HEK293 (cell line): ENCODE measurements at regions of chr15 and their contacts with region 1.

Region 1: DNA sequence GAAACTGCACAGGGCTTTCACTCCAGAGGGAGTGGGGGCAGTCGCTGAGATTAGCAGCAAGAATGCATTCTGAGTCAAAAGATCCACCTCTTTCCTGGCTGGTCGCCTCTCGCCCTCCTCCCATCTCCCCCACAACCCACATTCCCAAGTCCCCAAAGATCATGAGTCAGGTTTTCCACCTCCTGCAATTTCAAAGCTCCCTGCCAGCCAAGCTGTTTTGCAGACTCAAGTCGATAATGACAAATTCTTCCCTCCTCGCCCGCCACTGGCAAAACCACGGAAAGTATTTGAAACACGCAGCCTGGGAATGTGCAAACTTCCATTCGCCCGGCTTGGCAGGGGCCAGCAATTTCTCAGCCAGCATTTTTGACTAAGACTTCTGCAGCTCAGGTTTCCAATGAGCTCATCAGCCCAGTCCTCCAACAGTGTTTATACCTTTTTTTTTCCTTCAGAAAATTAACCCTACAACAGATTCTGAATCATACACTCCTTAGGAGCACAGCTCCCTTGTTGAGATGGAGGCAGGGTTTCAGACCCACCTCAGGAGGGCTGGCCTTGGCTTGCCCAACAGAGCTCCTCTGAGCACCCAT is 181.4 kb downstream of the SMAD6 start:
- H3K4me3 ChIP-seq: no peak overlapping the region
- H3K27ac ChIP-seq: peak overlapping the region; percentile 66
- H3K4me1 ChIP-seq: peaks cover 25% of the 10 kb centered on the region
- CTCF ChIP-seq: no peak

Region 2: DNA sequence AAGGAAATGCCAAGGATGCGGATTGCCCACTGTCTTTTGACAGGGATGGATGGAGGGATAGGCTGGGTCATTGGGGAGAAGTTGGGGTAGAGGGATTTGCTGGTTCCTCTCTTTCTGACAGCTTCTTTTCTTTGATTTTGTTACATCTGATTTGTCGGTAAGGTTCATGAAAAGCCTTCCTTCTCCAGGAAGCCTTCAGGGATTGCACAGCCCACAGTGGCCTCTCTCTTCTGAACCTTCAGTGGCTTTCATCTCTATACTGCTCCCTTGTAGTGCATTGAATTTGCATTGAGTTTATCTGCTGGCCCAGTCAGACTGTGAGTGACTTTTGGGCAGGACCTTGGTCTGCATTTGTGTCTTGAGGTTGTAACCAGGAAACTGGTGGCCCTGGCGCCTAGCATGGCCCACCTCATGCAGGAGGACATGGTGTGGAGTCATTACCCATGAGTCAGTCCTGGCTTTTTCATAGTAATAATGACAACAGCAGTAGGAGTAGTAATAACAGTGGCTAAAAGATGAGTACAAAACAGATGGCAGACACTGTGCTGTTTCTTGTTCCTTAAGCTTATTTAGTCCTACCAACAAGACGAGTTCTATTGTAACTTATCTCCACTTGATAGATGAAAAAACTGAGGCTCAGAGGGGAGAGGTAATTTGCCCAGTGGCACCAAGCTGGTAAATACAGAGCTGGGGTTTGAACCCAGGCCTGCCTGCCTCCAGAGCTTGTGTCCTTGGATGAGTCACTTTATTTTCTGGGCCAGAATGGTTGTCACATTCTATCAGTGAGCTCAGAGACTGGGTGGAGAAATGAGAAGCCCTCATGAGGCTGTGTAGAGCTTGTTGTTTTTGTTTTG is 153.0 kb before region 1 on chr15:
- CTCF ChIA-PET with region 1: no interaction called
- POLR2A ChIA-PET with region 1: no interaction called
- H3K4me3 ChIP-seq: no peak overlapping the region
- H3K27ac ChIP-seq: no peak overlapping the region
- H3K4me1 ChIP-seq: peaks cover under 1% of the 10 kb centered on the region; the same call in 1 of the 2 replicates
- CTCF ChIP-seq: no peak

Region 3: GRCh38 chr15:66819084-66819483 is 64.3 kb before region 1 on chr15:
- CTCF ChIA-PET with region 1: no interaction called
- POLR2A ChIA-PET with region 1: no interaction called
- H3K4me3 ChIP-seq: no peak overlapping the region
- H3K27ac ChIP-seq: no peak overlapping the region
- H3K4me1 ChIP-seq: no peaks in the 10 kb centered on the region
- CTCF ChIP-seq: no peak

Region 4: DNA sequence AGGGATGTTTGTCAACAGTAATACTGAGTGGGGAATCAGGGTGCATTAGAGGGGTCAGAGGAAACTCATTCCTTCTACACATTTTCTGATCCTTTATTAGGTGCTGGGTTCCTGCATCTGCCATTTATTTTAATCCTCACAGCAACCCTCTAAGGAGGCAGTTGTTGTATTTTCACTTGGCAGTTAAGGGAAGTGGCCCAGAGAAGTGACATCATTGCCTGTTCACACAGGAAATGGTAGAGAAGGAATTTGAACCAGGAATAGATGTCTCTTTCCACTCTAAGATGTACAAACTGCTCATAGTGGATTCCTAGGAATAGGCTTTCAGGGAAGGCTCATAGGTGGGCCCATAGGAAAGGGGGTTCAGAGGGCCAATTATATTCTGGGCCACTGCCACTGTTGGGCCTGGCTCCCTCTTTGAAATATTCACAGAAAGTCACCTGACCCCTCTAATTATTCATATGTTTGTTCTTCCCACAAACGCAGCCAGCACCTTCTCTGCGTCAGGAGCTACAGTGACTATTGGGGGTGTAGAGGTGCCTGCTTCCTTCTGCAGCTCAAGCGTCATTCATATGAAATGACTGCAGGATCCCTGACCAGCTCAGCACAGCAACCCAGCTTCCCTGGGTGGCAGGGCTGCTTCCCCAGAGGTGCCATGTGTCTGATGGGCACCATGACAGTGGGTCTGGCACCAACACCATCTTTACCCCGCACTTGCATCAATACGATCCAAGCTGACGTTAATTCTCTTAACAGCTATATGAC is 18.1 kb after region 1 on chr15:
- CTCF ChIA-PET with region 1: interaction called, 34 read pairs
- POLR2A ChIA-PET with region 1: interaction called, 5 read pairs
- H3K4me3 ChIP-seq: no peak overlapping the region
- H3K27ac ChIP-seq: no peak overlapping the region
- H3K4me1 ChIP-seq: no peaks in the 10 kb centered on the region
- CTCF ChIP-seq: no peak